ENCODE measurements at regions of chr18 and their contacts with region 1.

Region 1: GRCh38 chr18:23237524-23238151 is 102.4 kb downstream of the CABLES1 start:
- DNase-seq: peak; percentile 83
- H3K4me3 Mint-ChIP-seq: peak overlapping the region; percentile 68
- H3K27ac Mint-ChIP-seq: peak overlapping the region; percentile 61
- H3K4me1 Mint-ChIP-seq: peaks cover 42% of the 10 kb centered on the region
- H3K27me3 Mint-ChIP-seq: no peaks in the 10 kb centered on the region

Region 2: DNA sequence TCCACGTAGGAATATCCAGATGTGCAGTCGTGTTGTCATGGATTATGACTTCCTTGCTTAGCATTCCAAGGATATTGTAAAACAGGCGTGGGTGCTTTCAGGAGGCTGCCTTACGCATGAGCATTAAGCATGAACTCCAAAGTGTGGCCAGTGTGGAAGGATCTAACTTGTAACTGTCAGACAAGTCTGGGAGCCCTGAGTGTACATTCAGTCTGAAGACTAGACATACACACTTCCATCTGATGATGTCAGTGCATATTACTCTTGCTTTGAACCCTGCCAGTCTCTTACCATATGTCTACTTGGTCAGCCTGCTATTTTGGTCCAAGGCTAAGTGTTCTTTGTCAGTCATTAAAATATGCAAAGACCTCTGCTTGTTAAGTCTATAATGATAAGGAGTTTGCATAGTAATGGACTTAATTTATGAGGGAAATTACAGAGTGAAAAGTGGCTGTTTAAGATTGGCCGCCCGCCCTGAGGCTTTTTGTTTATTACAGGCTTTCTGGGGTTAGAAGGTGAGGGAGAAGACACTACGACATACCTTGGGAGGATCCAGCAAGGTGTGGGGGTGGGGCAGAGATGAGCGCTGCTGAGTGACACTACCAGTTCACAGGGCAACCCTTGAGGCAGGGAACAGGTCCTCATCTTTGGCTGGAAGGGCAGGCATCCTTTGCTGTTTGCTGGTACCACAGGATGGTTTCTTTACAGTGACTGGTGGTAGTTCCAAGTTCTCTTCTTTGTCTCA is 54.1 kb before region 1 on chr18:
- intact Hi-C with region 1: no loop called
- DNase-seq: no peak
- H3K4me3 Mint-ChIP-seq: no peak overlapping the region
- H3K27ac Mint-ChIP-seq: no peak overlapping the region
- H3K4me1 Mint-ChIP-seq: peaks cover 7% of the 10 kb centered on the region
- H3K27me3 Mint-ChIP-seq: no peaks in the 10 kb centered on the region

Region 3: DNA sequence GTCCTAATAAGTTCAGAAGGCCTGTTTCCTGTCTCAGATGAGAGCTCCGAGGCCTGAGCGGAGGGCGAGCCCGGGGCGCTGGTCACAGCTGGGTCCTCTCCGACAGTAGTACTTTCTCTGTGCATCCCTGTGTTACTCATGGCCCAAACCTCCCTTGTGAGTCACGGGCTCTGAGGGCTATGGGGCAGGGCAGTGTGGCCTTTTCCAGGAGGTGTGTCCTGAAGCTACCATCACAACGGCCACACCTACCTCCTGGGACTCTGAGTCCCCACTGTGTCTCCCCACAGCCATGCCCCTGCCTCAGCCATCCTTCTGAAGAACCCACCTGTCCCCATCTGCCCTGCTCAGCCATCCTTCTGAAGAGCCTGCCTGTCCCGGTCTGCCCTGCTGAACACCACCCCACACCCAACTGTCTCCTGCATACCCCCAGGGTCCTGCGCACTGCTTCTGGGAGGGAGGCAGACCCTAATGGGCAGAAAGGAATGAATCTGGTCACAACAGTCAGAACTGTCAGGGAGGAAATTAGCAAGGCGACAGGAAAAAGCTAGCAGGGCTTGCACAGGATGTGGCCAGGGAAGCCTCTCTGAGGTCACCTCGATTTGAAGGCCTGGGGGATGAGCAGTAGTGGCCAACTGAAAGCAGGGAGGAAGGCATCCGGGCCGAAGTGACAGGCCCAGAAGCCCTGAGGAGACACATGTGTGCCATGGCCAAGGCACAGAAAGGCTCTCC is 70.1 kb after region 1 on chr18:
- intact Hi-C with region 1: loop called (anchors 5 kb)
- DNase-seq: peak; percentile 79
- H3K4me3 Mint-ChIP-seq: peak overlapping the region; percentile 66
- H3K27ac Mint-ChIP-seq: peak overlapping the region; percentile 71
- H3K4me1 Mint-ChIP-seq: peaks cover 40% of the 10 kb centered on the region
- H3K27me3 Mint-ChIP-seq: no peaks in the 10 kb centered on the region

Region 4: DNA sequence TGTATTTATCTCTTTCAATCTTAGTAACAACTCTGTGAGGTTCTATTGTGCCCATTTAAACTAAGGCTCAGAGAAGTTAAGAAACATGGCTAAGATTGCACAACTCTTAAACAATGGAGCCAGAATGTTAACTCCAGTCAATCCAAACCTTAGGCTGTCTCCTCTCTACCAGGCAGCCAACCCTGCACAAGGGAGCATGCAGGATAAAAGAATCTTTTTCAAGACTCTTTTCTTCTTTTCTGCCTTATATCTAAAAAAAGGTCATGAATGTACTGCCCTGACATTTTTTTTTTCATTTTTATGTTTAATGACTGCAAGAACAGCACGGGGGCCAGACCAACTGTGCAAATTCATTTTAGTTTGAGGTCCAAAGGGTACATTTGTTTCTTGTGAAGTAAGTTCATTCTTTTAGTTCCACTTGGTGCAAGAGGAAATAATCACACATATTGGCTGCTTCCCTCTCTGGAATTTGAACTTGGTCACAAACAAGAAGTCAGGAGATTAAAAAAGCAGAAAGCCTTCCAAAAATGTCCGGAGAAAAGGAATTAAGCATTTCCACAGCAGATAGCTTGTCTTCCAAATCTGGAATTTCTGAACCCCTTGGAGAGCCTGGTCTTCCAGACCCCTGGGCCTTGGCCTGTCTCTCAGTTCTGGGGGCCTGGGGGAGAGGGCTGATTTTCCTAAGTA is 119.4 kb after region 1 on chr18:
- intact Hi-C with region 1: loop called (anchors 5 kb)
- DNase-seq: no peak
- H3K4me3 Mint-ChIP-seq: no peak overlapping the region
- H3K27ac Mint-ChIP-seq: no peak overlapping the region
- H3K4me1 Mint-ChIP-seq: peaks cover 20% of the 10 kb centered on the region
- H3K27me3 Mint-ChIP-seq: no peaks in the 10 kb centered on the region

Measured in activated CD4-positive, alpha-beta T cell treated with anti-CD3 and anti-CD28 coated beads, Interleukin-2, amount 10 ng/mL, durations not matched to agents 24 days and 14 days (primary cell).